Activated T-helper 2 cell treated with anti-CD3 and anti-CD28 coated beads, Interferon-gamma antibody, Interleukin-2, Interleukin-4, amounts not matched to agents 10 μg/mL and 5 μg/mL and 100 μg/mL, durations not matched to agents 14 hours and 24 hours and 36 hours (primary cell): ENCODE measurements at regions of chr9 and their contacts with region 1.

Region 1: GRCh38 chr9:128786681-128787601 is at the start of gene TBC1D13:
- DNase-seq: peak; percentile 86
- H3K4me3 Mint-ChIP-seq: peak within 1 kb of the TSS; percentile 96
- H3K27ac Mint-ChIP-seq: peak within 1 kb of the TSS; percentile 90
- H3K4me1 Mint-ChIP-seq: peaks cover 20% of the 10 kb centered on the region
- H3K27me3 Mint-ChIP-seq: no peaks in the 10 kb centered on the region
- total RNA-seq, gene TBC1D13: 20.5 and 24.2 TPM in 2 replicates

Region 2: DNA sequence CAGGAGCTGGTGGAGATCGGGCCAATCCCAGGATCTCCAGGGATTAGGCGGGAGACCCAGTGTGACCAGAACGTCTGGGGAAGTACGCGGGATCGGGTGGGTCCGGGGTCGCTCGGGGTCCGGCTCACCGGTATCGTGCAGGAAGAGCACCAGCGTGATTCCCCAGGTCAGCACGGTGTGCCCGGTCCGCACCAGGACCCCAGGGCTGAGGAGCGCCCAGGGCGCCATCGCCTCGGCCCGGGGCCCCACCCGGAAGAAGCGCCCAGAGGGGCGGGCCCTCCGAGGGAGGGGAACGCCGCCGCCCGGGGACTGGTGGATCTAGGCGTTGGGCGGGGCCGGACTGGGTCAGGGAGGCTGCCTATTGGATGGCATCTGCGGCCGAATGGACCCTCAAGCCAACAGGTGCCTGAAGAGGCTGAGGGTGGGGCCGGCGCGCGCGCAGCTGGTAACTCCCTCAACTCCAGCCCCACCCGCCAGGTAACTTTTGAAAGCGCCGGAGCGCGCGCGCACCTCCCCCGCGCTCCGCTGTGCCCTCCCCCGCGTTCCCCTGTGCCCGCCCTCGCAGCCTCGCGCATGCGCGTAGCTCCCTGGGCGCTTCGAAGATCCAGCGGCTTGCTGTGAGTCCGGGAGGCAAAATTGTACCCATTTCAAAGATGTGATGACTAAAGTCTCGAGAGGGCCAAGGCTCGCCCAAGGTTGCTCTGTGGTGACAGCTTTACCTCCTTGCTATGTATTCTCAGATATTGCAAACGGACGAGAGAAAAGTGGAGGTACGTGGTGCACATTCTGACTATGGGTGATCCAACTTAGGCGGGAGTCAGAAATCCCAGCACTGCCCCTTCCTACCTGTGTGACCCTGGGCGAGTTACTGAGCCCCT is 62.8 kb before region 1 on chr9 and contains the start of gene ZDHHC12:
- intact Hi-C with region 1: loop called (anchors 1 kb)
- DNase-seq: peak; percentile 99
- H3K4me3 Mint-ChIP-seq: peak within 1 kb of the TSS; percentile 98
- H3K27ac Mint-ChIP-seq: peak within 1 kb of the TSS; percentile 90
- H3K4me1 Mint-ChIP-seq: peaks cover 35% of the 10 kb centered on the region
- H3K27me3 Mint-ChIP-seq: no peaks in the 10 kb centered on the region
- total RNA-seq, gene ZDHHC12: 51.7 and 53.2 TPM in 2 replicates

Region 3: GRCh38 chr9:128747234-128747633 is 39.7 kb before region 1 on chr9:
- intact Hi-C with region 1: no loop called
- DNase-seq: no peak
- H3K4me3 Mint-ChIP-seq: no peak overlapping the region
- H3K27ac Mint-ChIP-seq: no peak overlapping the region
- H3K4me1 Mint-ChIP-seq: no peaks in the 10 kb centered on the region
- H3K27me3 Mint-ChIP-seq: no peaks in the 10 kb centered on the region